CD8-positive, alpha-beta memory T cell (primary cell): ENCODE measurements at regions of chr14 and their contacts with region 1.

Region 1: DNA sequence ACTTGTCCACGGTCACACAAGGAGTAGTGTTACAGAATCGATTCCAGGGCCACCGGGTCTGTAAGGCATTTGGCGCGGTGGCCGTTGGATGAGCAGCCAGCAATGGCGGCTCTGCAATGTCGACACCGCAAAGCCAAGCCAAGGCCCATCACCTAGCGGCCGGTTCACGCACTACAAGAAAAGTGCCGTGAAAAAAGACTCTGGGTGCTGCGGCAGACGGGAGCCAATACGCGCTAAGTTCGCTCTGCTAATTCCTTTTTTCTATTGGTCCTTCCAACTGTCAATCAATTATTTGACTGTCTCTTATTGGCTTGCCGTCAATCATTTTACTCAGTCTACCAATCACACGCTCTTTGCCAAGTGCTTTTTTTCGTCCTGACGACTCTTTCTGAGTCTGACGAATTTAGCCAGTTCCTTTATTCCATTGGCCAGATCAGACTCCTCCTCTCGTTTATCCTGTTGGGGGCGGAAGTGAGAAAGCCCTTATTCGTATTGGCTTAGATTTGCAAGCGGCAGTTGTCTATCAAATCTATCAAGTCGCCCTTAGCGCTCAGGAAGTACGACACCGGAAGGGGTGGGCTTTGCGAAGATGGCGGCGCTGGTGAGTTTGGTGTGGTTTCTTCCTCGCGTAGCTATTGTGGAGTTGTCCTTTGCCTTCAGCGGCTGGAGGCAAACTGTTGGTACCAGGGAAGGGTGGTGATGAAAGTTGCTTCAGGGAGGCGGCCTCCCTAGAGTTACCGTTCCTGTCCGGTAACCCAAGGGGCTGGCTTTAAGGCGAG is at the start of gene NGDN:
- DNase-seq: peak; percentile 81 to 97 (median 95)
- H3K4me3 ChIP-seq: peak within 1 kb of the TSS; percentile 94
- H3K4me3 Mint-ChIP-seq: peak within 1 kb of the TSS in 2 of 7 donors; percentile 35 to 80
- H3K27ac ChIP-seq: peak within 1 kb of the TSS; percentile 85
- H3K27ac Mint-ChIP-seq: peak within 1 kb of the TSS in 3 of 8 donors; percentile 47 to 86 (median 54)
- H3K4me1 ChIP-seq: peaks cover 14% of the 10 kb centered on the region
- H3K4me1 Mint-ChIP-seq: peaks cover 0 to 11% (median 7%) of the 10 kb centered on the region in 3 donors
- H3K27me3 ChIP-seq: no peaks in the 10 kb centered on the region
- H3K27me3 Mint-ChIP-seq: peaks cover 0 to 1% of the 10 kb centered on the region in 2 donors
- total RNA-seq, gene NGDN: 82.7 to 88.7 TPM

Region 2: GRCh38 chr14:23209651-23210423 is 259.5 kb before region 1 on chr14:
- CTCF ChIA-PET with region 1: no interaction called
- POLR2A ChIA-PET with region 1: no interaction called
- DNase-seq: no peak
- H3K4me3 ChIP-seq: no peak overlapping the region
- H3K4me3 Mint-ChIP-seq: no peak overlapping the region
- H3K27ac ChIP-seq: no peak overlapping the region
- H3K27ac Mint-ChIP-seq: no peak overlapping the region
- H3K4me1 ChIP-seq: no peaks in the 10 kb centered on the region
- H3K4me1 Mint-ChIP-seq: no peaks in the 10 kb centered on the region
- H3K27me3 ChIP-seq: no peaks in the 10 kb centered on the region
- H3K27me3 Mint-ChIP-seq: peaks cover 13 to 51% of the 10 kb centered on the region in 2 donors

Region 3: DNA sequence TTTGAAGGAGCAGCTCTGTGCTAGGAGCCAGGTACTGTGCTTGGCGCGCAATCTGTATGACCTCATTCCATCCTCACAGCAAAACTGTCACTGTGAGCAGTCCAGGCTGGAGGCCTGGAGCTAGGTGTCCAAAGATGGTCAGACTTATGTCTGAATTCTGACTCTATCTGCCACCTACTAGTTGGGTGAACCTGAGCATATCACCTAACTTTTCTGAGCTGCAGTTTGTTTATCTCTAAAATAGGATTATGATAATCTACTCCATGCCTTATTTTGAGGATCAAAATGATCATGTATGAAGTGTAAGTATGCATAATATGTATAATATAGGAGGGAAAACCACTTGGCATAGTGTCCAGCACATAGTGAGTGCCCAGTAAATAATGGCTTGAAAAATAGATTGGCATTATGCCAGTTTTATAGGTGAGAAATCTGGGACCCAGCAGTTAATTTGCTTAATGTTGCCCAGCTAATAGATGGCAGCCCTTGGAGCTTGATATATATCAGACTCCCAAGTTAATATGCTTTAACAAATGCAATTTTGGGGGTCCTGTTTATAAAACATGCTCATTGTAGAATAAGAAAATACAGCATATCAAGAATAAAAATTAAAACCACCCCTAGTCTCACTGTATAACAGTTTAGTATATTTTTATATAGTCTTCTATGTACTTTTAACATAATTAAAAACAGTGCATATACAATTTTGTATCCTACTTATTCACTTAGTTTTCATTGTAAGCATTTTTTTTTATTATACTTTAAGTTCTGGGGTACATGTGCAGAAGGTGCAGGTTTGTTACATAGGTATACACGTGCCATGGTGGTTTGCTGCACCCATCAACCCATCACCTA is 113.8 kb after region 1 on chr14:
- CTCF ChIA-PET with region 1: no interaction called
- POLR2A ChIA-PET with region 1: interaction called, 11 read pairs
- DNase-seq: no peak
- H3K4me3 ChIP-seq: no peak overlapping the region
- H3K4me3 Mint-ChIP-seq: no peak overlapping the region
- H3K27ac ChIP-seq: no peak overlapping the region
- H3K27ac Mint-ChIP-seq: no peak overlapping the region
- H3K4me1 ChIP-seq: no peaks in the 10 kb centered on the region
- H3K4me1 Mint-ChIP-seq: peaks cover 0 to 8% (median 4%) of the 10 kb centered on the region in 3 donors
- H3K27me3 ChIP-seq: peaks cover 5% of the 10 kb centered on the region
- H3K27me3 Mint-ChIP-seq: peaks cover 28 to 52% of the 10 kb centered on the region in 2 donors